PC-9 (cell line): ENCODE measurements at regions of chr2 and their contacts with region 1.

Region 1: DNA sequence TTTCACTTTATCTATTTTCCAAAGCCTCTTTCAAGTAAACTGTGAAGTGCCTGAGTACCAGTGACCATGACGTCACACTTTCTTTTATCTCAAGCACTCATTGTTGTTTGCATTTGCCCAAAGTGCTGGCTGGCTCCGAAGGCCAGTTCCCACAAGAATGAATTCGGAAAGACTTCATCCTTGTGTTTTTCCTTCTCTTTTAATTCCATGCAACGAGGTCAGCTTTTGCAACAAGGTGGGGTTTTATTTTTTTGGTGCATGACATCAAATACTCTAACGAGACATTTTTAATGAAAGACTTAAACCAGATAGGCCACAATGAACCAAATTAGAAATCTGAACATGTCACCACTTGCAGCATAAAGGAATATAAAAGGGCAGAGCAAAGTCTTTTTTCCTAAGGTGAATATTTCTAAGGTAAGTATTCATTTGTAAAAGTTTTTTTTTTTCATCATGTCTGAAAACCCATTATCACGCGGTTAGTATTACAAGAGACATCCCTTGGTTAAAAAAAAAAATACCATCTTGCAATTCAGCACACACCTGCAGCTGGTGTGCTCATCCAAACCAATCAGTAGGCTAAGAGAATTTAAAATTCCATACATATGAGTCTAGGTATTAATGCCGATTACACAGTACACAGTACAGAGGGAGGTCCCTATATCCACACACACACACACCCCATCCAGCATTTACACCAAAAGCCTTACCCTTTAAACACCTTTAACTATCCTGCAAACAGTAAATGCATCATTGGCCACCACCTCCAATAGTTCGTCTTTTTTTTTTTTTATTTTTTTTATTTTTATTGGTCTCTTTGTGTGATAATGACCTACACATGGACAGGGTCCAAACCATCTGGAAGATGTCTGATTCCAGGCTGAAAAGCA is 2.3 kb downstream of the ARL4C start:
- DNase-seq: peak; percentile 16 to 83
- H3K4me3 ChIP-seq: peak overlapping the region; percentile 91
- H3K27ac ChIP-seq: peak overlapping the region; percentile 48
- H3K4me1 ChIP-seq: peaks cover 26% of the 10 kb centered on the region
- H3K27me3 ChIP-seq: no peaks in the 10 kb centered on the region
- CTCF ChIP-seq: peak; percentile 21; the same call in 1 of the 2 replicates

Region 2: GRCh38 chr2:234288974-234289455 is 205.6 kb before region 1 on chr2:
- CTCF ChIA-PET with region 1: interaction called, 8 read pairs
- POLR2A ChIA-PET with region 1: no interaction called
- intact Hi-C with region 1: loop called (anchors 2 kb)
- DNase-seq: peak in 1 of 2 experiments; percentile 58
- H3K4me3 ChIP-seq: no peak overlapping the region
- H3K27ac ChIP-seq: no peak overlapping the region
- H3K4me1 ChIP-seq: peaks cover 23% of the 10 kb centered on the region
- H3K27me3 ChIP-seq: no peaks in the 10 kb centered on the region
- CTCF ChIP-seq: peak; percentile 87

Region 3: DNA sequence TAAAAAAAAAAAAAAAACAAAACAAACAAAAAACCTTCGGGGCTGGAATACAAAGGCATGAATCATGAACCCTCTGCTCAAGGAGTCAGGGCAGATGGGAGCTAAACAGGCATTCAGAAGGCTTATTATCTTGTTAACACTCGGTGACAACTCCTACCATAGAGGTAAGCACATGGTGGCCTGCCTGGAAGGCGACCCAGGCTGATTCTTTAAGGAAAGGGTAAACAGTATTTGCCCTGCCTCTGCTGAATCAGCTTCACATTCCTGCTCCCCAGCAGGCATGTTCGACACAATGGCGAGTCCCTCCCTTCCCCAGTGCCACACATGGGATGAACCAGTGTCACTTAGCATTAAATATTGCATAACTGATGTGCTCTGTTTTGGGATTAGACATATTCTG is 189.7 kb before region 1 on chr2:
- CTCF ChIA-PET with region 1: no interaction called
- POLR2A ChIA-PET with region 1: no interaction called
- intact Hi-C with region 1: loop called (anchors 2 kb)
- DNase-seq: peak; percentile 79 to 95
- H3K4me3 ChIP-seq: no peak overlapping the region
- H3K27ac ChIP-seq: peak overlapping the region; percentile 60
- H3K4me1 ChIP-seq: peaks cover 43% of the 10 kb centered on the region
- H3K27me3 ChIP-seq: no peaks in the 10 kb centered on the region
- CTCF ChIP-seq: no peak

Region 4: DNA sequence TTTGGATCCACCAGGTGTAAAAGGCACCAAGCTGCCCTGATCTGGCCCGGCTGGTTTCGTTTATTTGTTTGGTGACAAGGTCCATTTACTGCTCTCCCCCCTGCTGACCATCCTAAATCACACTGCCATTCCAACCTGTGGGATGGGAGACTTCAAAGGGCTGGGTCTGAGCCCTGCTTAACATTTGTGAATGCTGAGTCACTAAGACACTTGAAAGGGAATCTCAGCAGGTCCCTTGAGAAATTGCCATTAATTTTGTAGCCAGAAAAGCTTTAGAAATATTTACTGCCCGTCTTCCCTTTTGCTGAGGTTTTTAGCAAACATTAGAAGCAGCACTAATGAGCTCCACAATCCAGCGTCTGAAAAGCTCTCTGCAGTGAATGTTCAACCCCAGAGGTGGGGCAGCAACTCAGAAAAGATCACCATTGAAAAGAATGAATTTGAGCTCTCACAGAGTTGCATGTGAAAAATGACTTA is 131.6 kb before region 1 on chr2:
- CTCF ChIA-PET with region 1: no interaction called
- POLR2A ChIA-PET with region 1: interaction called, 8 read pairs
- intact Hi-C with region 1: loop called (anchors 2 kb)
- DNase-seq: peak; percentile 73 to 99
- H3K4me3 ChIP-seq: peak overlapping the region; percentile 32; the same call in 1 of the 2 replicates
- H3K27ac ChIP-seq: peak overlapping the region; percentile 86
- H3K4me1 ChIP-seq: peaks cover 78% of the 10 kb centered on the region
- H3K27me3 ChIP-seq: no peaks in the 10 kb centered on the region
- CTCF ChIP-seq: no peak

Region 5: DNA sequence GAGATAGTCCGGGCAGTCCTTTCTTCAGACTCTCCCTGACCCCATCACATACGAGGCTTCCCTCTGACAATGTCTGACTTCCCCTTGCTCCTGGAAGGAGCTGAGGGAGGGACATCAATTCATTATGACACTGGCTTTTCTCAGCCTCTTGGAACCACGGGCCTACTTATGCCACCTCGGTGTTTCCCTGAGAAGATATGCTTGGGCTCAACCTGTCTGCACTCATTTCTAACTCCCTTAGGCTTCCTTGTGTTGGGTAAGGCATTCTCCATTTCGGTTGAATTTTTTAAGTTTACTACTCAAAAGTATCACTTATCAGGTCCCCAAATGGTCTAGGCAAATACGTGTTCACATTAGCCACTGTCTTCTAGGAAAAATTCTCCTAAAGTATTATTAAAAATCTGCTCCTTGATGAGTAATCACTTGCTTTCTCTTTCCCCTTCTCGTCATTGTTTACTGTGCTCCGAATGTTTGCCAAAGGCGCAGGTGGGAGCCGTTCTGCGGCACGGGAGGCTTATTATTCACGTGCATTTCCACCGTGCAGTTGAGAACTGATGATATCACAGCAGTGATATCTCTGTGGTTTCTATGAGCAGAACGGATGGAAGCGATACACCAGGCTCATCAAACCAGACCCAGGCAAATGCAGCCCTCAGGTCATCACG is 30.8 kb before region 1 on chr2:
- CTCF ChIA-PET with region 1: no interaction called
- POLR2A ChIA-PET with region 1: interaction called, 4 read pairs
- intact Hi-C with region 1: loop called (anchors 2 kb)
- DNase-seq: peak; percentile 83 to 94
- H3K4me3 ChIP-seq: peak overlapping the region; percentile 32; the same call in 1 of the 2 replicates
- H3K27ac ChIP-seq: 0 out of 2 replicates have a peak overlapping the region, but pooled peaks have one; percentile 6
- H3K4me1 ChIP-seq: peaks cover 37% of the 10 kb centered on the region
- H3K27me3 ChIP-seq: no peaks in the 10 kb centered on the region
- CTCF ChIP-seq: no peak

Region 6: GRCh38 chr2:234763002-234763873 is 268.6 kb after region 1 on chr2:
- CTCF ChIA-PET with region 1: no interaction called
- POLR2A ChIA-PET with region 1: no interaction called
- intact Hi-C with region 1: no loop called
- DNase-seq: no peak
- H3K4me3 ChIP-seq: no peak overlapping the region
- H3K27ac ChIP-seq: no peak overlapping the region
- H3K4me1 ChIP-seq: 0 out of 2 replicates have a peak, but pooled peaks cover 8% of the 10 kb centered on the region
- H3K27me3 ChIP-seq: no peaks in the 10 kb centered on the region
- CTCF ChIP-seq: no peak